ENCODE measurements at regions of chr1 and their contacts with region 1.

Region 1: GRCh38 chr1:150486964-150487762 is at the start of gene TARS2:
- DNase-seq: peak; percentile 97
- ATAC-seq: peak; percentile 99
- H3K4me3 ChIP-seq: peak within 1 kb of the TSS; percentile 78 to 80 (median 80)
- H3K27ac ChIP-seq: peak within 1 kb of the TSS; percentile 65
- H3K4me1 ChIP-seq: peaks cover 24% of the 10 kb centered on the region
- H3K27me3 ChIP-seq: no peaks in the 10 kb centered on the region
- CTCF ChIP-seq: peak; percentile 31
- EP300 ChIP-seq: peak in 1 of 2 experiments; percentile 29; a peak in 1 of 4 replicates
- POLR2A ChIP-seq: peak; percentile 78 to 83
- RAD21 ChIP-seq: no peak
- total RNA-seq, gene TARS2: 18.9 and 22.8 TPM in 2 replicates

Region 2: GRCh38 chr1:150621497-150622302 is 134.5 kb after region 1 on chr1:
- CTCF ChIA-PET with region 1: no interaction called
- POLR2A ChIA-PET with region 1: no interaction called
- in situ Hi-C with region 1: no loop called
- intact Hi-C with region 1: loop called (anchors 5 kb)
- DNase-seq: peak; percentile 48
- ATAC-seq: no peak
- H3K4me3 ChIP-seq: no peak overlapping the region
- H3K27ac ChIP-seq: no peak overlapping the region
- H3K4me1 ChIP-seq: peaks cover 38% of the 10 kb centered on the region
- H3K27me3 ChIP-seq: no peaks in the 10 kb centered on the region
- CTCF ChIP-seq: peak; percentile 68
- EP300 ChIP-seq: no peak
- POLR2A ChIP-seq: no peak
- RAD21 ChIP-seq: peak; percentile 65

Region 3: GRCh38 chr1:150789396-150789795 is 302.2 kb after region 1 on chr1:
- CTCF ChIA-PET with region 1: no interaction called
- POLR2A ChIA-PET with region 1: no interaction called
- in situ Hi-C with region 1: no loop called
- intact Hi-C with region 1: no loop called
- DNase-seq: no peak
- ATAC-seq: no peak
- H3K4me3 ChIP-seq: no peak overlapping the region
- H3K27ac ChIP-seq: no peak overlapping the region
- H3K4me1 ChIP-seq: peaks cover 7% of the 10 kb centered on the region; the same call in 1 of the 2 replicates
- H3K27me3 ChIP-seq: no peaks in the 10 kb centered on the region
- CTCF ChIP-seq: no peak
- EP300 ChIP-seq: no peak
- POLR2A ChIP-seq: no peak
- RAD21 ChIP-seq: no peak